HEK293T (cell line): ENCODE measurements at regions of chr11 and their contacts with region 1.

Region 1: DNA sequence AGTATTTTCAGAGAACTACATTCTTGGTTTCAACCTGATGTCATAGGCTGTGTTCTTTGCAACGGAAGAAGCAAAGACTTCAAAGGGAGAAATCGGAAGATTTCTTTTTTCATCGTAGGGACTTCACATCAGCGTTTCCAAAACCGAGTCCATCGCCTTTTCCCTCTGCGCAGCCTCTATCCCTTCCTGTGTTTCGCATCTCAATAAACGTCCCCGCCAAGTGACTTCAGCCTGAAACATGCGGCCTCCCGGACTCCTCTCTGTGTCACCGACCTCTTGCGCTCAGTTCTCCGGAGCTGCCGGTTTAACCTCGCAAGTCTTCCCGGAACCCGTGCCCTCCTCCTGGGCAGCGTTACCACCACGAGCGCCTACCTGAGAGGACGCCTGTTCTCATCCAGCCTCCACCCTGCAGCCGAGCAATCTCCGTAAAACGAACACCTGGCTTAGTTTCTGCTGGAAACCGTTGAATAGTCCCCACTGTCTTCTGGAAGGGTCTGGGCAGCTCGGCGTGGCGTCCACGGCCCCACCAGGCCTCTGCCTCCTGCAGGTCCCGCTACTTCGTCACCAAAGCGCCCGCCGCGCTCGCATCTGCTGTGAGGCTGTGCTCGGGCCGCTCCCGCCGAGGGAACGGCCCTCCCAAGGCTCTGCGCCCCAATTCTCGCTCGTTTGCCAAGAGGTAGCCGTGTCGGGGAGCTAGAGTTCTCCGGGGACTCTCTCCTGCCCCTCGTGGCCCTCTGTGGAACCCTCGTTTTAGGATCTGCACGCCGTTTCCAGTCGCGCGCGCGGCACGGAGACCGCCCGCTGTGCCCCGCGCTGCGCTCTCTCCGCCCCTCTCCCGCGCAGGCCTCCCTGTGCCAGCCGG is at the start of gene GLB1L3:
- DNase-seq: peak; percentile 68

Region 2: GRCh38 chr11:134253188-134253993 is 22.4 kb before region 1 on chr11 and contains the starts of genes ACAD8 and THYN1:
- CTCF ChIA-PET with region 1: interaction called, 4 read pairs
- POLR2A ChIA-PET with region 1: interaction called, 15 read pairs
- DNase-seq: peak; percentile 99

Region 3: DNA sequence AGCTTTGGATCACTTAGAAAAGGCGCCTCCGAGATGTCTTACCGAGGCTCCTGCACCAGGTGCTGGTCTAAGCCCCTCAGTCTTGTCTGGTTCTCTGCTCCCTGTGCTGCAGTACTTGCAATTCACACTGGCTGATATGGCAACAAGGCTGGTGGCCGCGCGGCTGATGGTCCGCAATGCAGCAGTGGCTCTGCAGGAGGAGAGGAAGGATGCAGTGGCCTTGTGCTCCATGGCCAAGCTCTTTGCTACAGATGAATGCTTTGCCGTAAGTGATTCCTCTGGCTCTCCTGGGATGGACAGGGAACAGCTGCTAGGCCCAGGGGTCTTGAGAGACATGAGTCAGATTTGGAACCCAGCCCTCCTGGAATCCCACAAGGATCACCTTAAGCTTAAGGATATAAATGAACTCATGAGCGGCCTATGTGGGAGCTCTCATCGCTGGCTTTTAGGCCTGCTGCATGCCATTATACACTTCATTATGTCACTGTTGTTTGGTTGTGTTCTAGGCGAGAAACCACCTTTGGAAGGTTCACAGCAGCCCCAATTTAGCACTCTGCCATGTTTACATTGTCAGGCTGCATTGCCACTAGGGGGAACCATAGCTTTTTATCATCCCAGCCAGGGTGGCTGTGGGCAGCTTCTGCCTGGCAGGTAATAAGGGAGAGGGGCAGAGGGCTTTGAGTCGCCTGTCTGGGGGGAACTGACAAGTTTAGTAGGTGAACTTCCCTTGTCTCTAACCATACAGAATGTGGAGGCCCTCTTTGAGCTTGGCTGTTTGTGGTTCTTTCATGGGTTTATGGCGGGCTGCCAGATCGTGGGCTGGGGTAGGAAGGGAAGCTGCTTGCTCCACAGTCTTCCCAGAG is 13.9 kb before region 1 on chr11:
- CTCF ChIA-PET with region 1: interaction called, 10 read pairs
- POLR2A ChIA-PET with region 1: interaction called, 4 read pairs
- DNase-seq: peak; percentile 53